Pancreas (tissue), 10 donors: ENCODE measurements at regions of chr2 and their contacts with region 1.

Region 1: DNA sequence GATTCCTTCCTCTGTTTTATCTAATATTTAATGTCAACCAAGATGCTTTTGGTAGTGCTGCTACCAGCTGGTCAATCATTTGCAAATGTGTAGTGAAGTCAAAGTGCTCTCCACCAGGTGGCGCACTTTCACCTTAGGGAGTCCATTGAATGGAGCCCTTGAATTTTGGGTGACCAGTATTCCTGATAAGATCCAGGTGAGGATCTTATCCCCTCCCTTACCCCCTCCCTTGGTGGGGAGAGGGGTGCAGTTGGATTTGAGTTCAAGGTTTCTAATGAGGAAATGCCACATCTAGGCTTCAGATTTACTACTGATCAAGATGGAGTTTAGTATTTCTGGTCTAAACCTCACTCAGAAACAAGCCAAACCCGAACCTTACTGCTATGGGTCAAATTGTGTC is 12.0 kb upstream of the E2F6 start:
- DNase-seq: peak; percentile 74 to 97 (median 88)
- ATAC-seq: peak; percentile 77 to 89 (median 82)
- H3K4me3 ChIP-seq: no peak overlapping the region
- H3K27ac ChIP-seq: no peak overlapping the region
- H3K4me1 ChIP-seq: no peaks in the 10 kb centered on the region
- H3K27me3 ChIP-seq: no peaks in the 10 kb centered on the region
- CTCF ChIP-seq: peak; percentile 71 to 87 (median 84)

Region 2: GRCh38 chr2:11573418-11574175 is 95.6 kb after region 1 on chr2:
- intact Hi-C with region 1: loop called in 2 of 3 experiments (anchors 5 to 10 kb)
- DNase-seq: no peak
- ATAC-seq: no peak
- H3K4me3 ChIP-seq: no peak overlapping the region
- H3K27ac ChIP-seq: no peak overlapping the region
- H3K4me1 ChIP-seq: peaks cover 0 to 4% (median 0%) of the 10 kb centered on the region in 3 donors
- H3K27me3 ChIP-seq: no peaks in the 10 kb centered on the region
- CTCF ChIP-seq: no peak

Region 3: GRCh38 chr2:11583840-11584524 is 106.0 kb after region 1 on chr2:
- intact Hi-C with region 1: loop called (anchors 2 to 10 kb)
- DNase-seq: peak in 5 of 6 donors; percentile 57 to 77 (median 70)
- ATAC-seq: peak; percentile 68 to 91 (median 86)
- H3K4me3 ChIP-seq: no peak overlapping the region
- H3K27ac ChIP-seq: no peak overlapping the region
- H3K4me1 ChIP-seq: peaks cover 0 to 7% (median 0%) of the 10 kb centered on the region in 3 donors
- H3K27me3 ChIP-seq: no peaks in the 10 kb centered on the region
- CTCF ChIP-seq: peak; percentile 58 to 82 (median 71)

Region 4: GRCh38 chr2:11589316-11589940 is 111.4 kb after region 1 on chr2:
- intact Hi-C with region 1: loop called in 2 of 3 experiments (anchors 2 to 5 kb)
- DNase-seq: no peak
- ATAC-seq: no peak
- H3K4me3 ChIP-seq: no peak overlapping the region
- H3K27ac ChIP-seq: no peak overlapping the region
- H3K4me1 ChIP-seq: no peaks in the 10 kb centered on the region
- H3K27me3 ChIP-seq: no peaks in the 10 kb centered on the region
- CTCF ChIP-seq: no peak